ENCODE measurements at regions of chr1 and their contacts with region 1.

Region 1: DNA sequence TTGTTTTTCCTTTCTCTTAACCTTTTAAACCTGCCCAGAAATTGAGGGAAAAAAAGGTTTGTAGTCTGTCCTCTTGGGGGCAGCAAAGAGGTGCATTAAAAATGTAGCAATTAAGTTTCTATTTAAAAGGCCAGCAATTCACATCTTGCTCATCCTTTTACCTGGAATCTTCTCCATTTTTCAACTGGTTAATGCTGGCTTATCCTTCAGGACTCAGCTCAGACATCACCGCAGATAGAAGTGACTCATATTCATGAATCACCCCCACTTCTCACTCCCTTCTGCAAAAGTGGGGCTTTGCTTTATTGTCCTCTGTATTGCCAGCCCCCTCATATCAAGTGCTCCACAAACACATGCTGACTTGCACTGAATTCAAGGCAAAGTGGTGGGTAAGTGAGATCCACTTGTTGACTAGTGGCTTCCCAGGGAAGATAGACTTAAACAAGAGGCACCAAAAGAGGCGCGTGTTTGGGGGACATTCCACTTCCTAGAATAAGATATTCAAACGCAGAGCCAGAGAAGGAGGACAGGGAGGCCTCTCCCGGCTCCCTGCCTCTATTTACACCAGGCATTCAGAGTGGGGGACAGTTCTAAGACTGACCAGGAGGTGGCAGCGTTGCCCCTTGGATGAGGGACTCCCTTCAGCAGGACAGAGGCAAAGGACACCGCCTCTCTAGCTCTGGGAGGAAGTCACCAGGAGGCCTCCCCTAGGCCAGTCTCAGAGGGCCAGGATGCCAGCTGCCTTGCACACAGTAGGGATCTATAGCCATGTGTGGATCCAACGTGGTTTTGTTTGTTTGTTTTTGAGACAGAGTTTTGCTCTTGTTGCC is 23.2 kb upstream of the ZNF648 start:
- DNase-seq: peak; percentile 93
- H3K4me3 ChIP-seq: no peak overlapping the region
- H3K27ac ChIP-seq: peak overlapping the region in 4 of 5 donors; percentile 25 to 70 (median 46)
- H3K4me1 ChIP-seq: peaks cover 0 to 30% (median 17%) of the 10 kb centered on the region in 4 donors
- H3K27me3 ChIP-seq: no peaks in the 10 kb centered on the region
- CTCF ChIP-seq: peak in 6 of 7 experiments; percentile 25 to 97 (median 89)
- EP300 ChIP-seq: no peak
- POLR2A ChIP-seq: no peak

Region 2: DNA sequence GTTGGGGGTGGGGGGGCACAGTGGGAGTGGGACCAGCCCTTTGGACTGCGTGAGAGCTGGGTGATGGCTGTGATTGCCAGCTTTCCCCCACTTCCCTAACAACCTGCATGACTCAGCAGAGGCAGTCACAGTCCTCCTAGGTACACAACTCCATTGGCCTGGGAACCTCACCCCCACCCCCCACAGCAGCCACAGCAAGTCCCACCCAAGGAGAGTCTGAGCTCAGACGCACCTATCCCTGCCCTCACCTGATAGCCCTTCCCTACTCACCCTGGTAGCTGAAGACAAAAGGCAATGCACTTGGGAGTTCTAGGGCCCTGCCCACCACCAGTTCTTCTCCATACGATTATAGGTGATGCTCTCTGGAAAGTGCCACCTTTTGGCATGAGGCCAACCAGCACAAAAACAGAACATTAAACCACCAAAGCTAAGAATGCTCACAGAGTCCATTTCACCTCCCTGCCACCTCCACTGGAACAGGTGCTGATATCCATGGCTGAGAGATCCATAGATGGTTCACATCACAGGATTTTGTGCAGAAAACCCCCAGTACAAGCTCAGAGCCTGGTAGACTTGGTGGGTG is 212.0 kb before region 1 on chr1:
- intact Hi-C with region 1: no loop called
- DNase-seq: no peak
- H3K4me3 ChIP-seq: no peak overlapping the region
- H3K27ac ChIP-seq: no peak overlapping the region
- H3K4me1 ChIP-seq: no peaks in the 10 kb centered on the region
- H3K27me3 ChIP-seq: no peaks in the 10 kb centered on the region
- CTCF ChIP-seq: no peak
- EP300 ChIP-seq: no peak
- POLR2A ChIP-seq: no peak

Region 3: GRCh38 chr1:182404781-182405180 is 320.1 kb after region 1 on chr1:
- intact Hi-C with region 1: loop called (anchors 5 kb)
- DNase-seq: no peak
- H3K4me3 ChIP-seq: no peak overlapping the region
- H3K27ac ChIP-seq: no peak overlapping the region
- H3K4me1 ChIP-seq: no peaks in the 10 kb centered on the region
- H3K27me3 ChIP-seq: no peaks in the 10 kb centered on the region
- CTCF ChIP-seq: no peak
- EP300 ChIP-seq: no peak
- POLR2A ChIP-seq: no peak

Region 4: DNA sequence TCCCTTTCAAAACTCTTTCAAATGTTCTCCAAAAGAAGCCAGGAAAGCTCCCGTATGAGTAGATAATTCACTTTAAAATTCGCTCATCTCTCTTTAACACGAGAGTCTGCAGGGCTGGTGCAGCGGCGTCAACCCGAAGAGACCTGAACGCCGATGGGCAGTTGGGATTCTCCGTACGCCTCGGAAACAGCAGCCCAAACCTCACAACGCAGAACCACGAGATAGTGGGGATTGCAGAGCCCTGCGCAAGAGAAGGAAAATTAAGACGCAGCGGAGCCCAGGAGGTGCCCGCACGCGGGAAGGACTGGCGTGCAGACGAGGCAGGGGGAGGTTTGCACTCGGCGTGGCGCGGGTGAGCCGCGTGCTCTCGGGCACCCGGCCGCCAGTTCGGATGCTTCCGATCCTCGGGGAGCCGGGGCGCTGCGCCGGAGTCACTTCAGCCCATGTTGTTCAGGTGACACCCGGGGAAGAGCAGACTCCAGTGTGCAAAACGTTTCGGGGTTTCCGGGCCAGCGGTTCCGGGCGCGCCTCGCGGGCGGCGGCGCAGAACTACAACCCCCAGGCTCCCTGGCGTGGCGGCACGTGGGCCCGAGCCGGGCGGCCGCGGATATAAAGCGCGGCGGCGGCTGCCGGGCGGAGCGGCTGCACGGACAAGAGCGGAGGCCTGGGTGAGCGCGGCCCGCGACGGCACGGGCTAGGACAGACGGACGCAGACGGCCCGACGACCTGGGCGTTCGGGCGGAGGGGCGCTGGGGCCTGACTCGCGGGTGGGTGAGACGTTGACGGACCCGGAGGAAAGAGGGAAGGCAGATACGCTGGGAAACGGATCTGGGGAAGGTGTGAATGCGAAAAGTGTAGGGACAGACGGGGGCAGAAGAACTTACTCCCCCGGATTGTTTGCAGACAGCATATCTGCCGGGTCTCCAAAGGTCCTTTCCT is 704.7 kb after region 1 on chr1 and contains the start of gene NPL:
- intact Hi-C with region 1: loop called (anchors 10 kb)
- DNase-seq: peak; percentile 85 to 94
- H3K4me3 ChIP-seq: peak within 1 kb of the TSS; percentile 63 to 80 (median 72)
- H3K27ac ChIP-seq: peak within 1 kb of the TSS; percentile 70 to 83 (median 75)
- H3K4me1 ChIP-seq: peaks cover 4 to 41% (median 18%) of the 10 kb centered on the region in 4 donors
- H3K27me3 ChIP-seq: no peaks in the 10 kb centered on the region
- CTCF ChIP-seq: no peak
- EP300 ChIP-seq: no peak
- POLR2A ChIP-seq: no peak
- total RNA-seq, gene NPL: 0.45 to 48.5 (median 5.5) TPM

Measured in stomach (tissue), 19 donors.